ENCODE measurements at regions of chr7 and their contacts with region 1.

Region 1: DNA sequence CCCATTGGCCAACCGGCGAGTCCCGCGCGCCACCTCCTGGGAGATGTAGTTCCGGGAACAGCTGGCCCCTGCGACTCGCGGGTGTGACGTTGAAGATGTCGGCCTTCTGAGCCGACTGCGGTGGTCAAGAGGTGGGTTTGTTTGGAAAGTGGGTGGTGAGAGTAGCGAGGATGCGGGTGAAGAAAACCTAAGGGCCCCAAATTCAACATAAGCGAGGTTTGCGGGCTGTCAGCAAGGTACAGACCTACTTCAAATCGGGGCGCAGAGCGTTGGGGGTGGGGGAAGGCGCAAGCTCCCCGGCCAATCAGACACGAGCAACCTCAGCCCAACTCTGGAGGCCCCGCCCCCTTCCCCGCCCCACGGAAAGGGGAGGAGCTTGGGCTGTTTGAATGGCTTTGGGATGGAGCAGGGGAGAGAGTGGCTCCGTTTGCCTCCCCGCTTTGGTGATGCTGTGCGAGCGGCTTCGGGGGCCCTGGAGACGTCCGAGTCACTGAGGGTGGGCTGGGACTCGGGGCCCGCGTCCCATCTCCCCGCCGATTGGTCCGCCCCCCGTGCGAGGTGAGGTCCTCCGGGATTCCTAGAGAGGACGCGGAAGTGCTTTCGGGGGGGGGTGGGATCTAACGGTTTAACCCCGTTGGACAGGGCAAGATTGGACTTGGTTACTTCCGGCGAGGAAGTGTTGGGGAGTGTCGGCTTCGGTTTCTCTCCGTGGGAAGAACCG is at the start of gene ZKSCAN5:
- DNase-seq: peak; percentile 98 to 99 (median 98)
- ATAC-seq: peak; percentile 88
- H3K4me3 ChIP-seq: peak within 1 kb of the TSS; percentile 84
- H3K27ac ChIP-seq: peak within 1 kb of the TSS; percentile 77
- H3K4me1 ChIP-seq: peaks cover 4 to 27% of the 10 kb centered on the region in 2 experiments; a peak in 3 of 5 replicates
- H3K27me3 ChIP-seq: no peaks in the 10 kb centered on the region
- CTCF ChIP-seq: 0 out of 6 replicates have a peak, but pooled peaks of 1 of the 3 experiments have one; percentile 8
- EP300 ChIP-seq: peak; percentile 68
- POLR2A ChIP-seq: peak; percentile 93
- RAD21 ChIP-seq: no peak; a peak in 1 of 4 replicates
- polyA plus RNA-seq, gene ZKSCAN5: 4.2 to 8.8 TPM

Region 2: GRCh38 chr7:99472561-99473243 is 32.1 kb before region 1 on chr7 and contains the start of gene ZNF789:
- CTCF ChIA-PET with region 1: no interaction called
- POLR2A ChIA-PET with region 1: interaction called, 8 read pairs
- in situ Hi-C with region 1: no loop called
- intact Hi-C with region 1: loop called (anchors 1 kb)
- DNase-seq: peak; percentile 99 to 100 (median 99)
- ATAC-seq: peak; percentile 97
- H3K4me3 ChIP-seq: peak within 1 kb of the TSS; percentile 92
- H3K27ac ChIP-seq: peak within 1 kb of the TSS; percentile 92
- H3K4me1 ChIP-seq: peaks cover 7 to 19% of the 10 kb centered on the region in 2 experiments; a peak in 4 of 5 replicates
- H3K27me3 ChIP-seq: no peaks in the 10 kb centered on the region
- CTCF ChIP-seq: no peak; a peak in 1 of 6 replicates
- EP300 ChIP-seq: 0 out of 2 replicates have a peak, but pooled peaks have one; percentile 2
- POLR2A ChIP-seq: peak; percentile 94
- RAD21 ChIP-seq: no peak
- polyA plus RNA-seq, gene ZNF789: 6.1 to 7.4 TPM

Region 3: DNA sequence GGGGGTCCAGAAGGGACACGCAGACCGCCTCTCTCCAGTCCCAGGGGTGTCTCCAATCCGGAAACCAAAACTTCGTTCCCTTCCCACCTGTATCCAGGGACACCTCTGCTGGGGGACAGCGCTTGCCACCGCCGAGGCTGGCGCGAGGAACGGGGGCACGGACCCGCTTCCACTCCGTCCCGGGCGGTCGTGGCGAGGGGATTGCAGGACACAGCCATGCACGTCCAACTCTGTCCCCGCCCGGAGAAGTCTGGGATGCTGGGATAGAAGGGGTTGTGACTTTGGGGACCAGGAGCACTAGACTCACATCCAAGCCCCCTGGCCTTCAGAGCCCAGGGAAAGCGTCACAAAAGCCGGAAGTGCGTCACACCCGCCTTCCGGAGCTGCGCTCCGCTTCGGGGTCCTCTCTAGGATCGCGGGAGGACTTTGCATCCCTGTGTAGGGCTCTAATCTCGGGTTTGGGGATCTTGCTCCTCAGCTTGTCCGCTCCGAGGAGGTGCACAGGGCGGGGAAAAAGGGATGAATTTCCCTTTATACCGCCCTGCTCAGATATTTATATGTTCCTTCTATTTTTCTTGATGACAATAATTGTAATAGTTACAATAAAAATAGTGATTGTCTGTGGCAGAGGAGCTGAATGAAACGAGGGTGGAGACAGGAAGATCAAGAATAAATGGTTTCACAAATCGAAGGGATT is 47.2 kb after region 1 on chr7 and contains the start of gene FAM200A:
- CTCF ChIA-PET with region 1: interaction called, 3 read pairs
- POLR2A ChIA-PET with region 1: interaction called, 31 read pairs
- in situ Hi-C with region 1: no loop called
- intact Hi-C with region 1: loop called (anchors 5 kb)
- DNase-seq: peak; percentile 92 to 98 (median 96)
- ATAC-seq: peak; percentile 99
- H3K4me3 ChIP-seq: peak within 1 kb of the TSS; percentile 79
- H3K27ac ChIP-seq: peak within 1 kb of the TSS; percentile 76
- H3K4me1 ChIP-seq: peaks cover 7% of the 10 kb centered on the region in 2 experiments; a peak in 4 of 5 replicates
- H3K27me3 ChIP-seq: no peaks in the 10 kb centered on the region
- CTCF ChIP-seq: no peak
- EP300 ChIP-seq: no peak; the same call in 1 of the 2 replicates
- POLR2A ChIP-seq: peak; percentile 95
- RAD21 ChIP-seq: no peak; a peak in 1 of 4 replicates
- polyA plus RNA-seq, gene FAM200A: 3.3 to 4.3 TPM

Region 4: GRCh38 chr7:99558306-99559174 is 53.8 kb after region 1 on chr7 and contains the start of gene ZNF655:
- CTCF ChIA-PET with region 1: no interaction called
- POLR2A ChIA-PET with region 1: interaction called, 31 read pairs
- in situ Hi-C with region 1: no loop called
- intact Hi-C with region 1: loop called (anchors 5 kb)
- DNase-seq: peak; percentile 97 to 99 (median 98)
- ATAC-seq: peak; percentile 92
- H3K4me3 ChIP-seq: peak within 1 kb of the TSS; percentile 88
- H3K27ac ChIP-seq: peak within 1 kb of the TSS; percentile 95
- H3K4me1 ChIP-seq: peaks cover 16 to 23% of the 10 kb centered on the region in 2 experiments
- H3K27me3 ChIP-seq: no peaks in the 10 kb centered on the region
- CTCF ChIP-seq: 0 out of 6 replicates have a peak, but pooled peaks of 1 of the 3 experiments have one; percentile 20
- EP300 ChIP-seq: peak; percentile 25; the same call in 1 of the 2 replicates
- POLR2A ChIP-seq: peak; percentile 97
- RAD21 ChIP-seq: no peak; a peak in 1 of 4 replicates
- polyA plus RNA-seq, gene ZNF655: 25.7 to 34.1 TPM

Measured in K562 (cell line).